Ovary (tissue), 10 donors: ENCODE measurements at regions of chr16 and their contacts with region 1.

Region 1: GRCh38 chr16:57576429-57576870 is 34.0 kb downstream of the ADGRG5 start:
- DNase-seq: peak; percentile 47 to 82 (median 71)
- H3K4me3 ChIP-seq: no peak overlapping the region
- H3K27ac ChIP-seq: no peak overlapping the region
- H3K4me1 ChIP-seq: peaks cover 2% of the 10 kb centered on the region
- H3K27me3 ChIP-seq: no peaks in the 10 kb centered on the region
- CTCF ChIP-seq: peak; percentile 40 to 71 (median 59)
- EP300 ChIP-seq: no peak
- POLR2A ChIP-seq: no peak

Region 2: GRCh38 chr16:57863434-57864160 is 287.1 kb after region 1 on chr16:
- intact Hi-C with region 1: loop called in 1 of 4 experiments (anchors 10 kb)
- DNase-seq: peak; percentile 53 to 71 (median 61)
- H3K4me3 ChIP-seq: no peak overlapping the region
- H3K27ac ChIP-seq: no peak overlapping the region
- H3K4me1 ChIP-seq: no peaks in the 10 kb centered on the region
- H3K27me3 ChIP-seq: no peaks in the 10 kb centered on the region
- CTCF ChIP-seq: peak in 2 of 3 donors; percentile 46 to 48
- EP300 ChIP-seq: no peak
- POLR2A ChIP-seq: no peak

Region 3: DNA sequence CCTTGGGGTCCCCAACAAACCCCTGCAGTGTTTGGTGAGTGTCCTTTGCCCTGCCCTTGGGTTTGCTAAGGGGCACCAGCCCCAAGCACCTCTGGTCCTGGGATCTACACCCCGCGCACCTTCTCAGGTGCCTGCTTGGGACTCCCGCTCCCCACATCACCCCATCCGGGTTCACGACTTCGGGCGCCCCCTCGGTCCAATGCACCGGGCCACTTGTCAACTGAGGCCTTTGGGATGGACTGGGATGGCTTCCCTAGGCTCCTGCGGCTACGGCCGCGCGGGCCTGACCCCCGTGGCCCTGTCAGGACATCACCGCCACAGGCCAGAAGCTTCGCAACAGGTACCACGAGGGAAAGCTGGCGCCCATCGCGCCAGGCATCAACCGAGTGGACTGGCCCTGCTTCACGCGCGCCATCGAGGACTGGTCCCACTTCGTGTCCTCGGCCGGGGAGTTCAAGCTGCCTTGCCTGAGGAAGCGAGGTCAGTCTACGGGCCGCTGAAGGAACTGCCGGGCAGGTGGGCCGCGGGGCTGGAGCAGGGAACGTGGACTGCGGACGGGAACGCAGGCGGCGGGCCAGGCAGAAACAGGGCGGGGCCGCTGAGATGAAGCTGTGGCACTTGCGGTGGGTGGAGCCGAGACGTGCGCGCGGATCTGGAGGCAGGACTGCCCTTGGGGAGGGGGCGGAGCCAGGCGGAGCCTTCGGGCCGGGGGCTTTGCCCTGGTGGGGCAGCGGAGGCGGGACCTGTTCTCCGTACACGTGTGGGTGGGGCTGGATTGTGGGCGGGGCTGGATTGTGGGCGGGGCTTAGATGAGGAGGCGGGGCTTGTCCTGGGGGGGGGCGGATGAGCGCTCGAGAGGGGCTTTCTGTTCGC is 408.1 kb after region 1 on chr16:
- intact Hi-C with region 1: loop called in 1 of 4 experiments (anchors 5 kb)
- DNase-seq: peak; percentile 90 to 94 (median 91)
- H3K4me3 ChIP-seq: peak overlapping the region; percentile 51
- H3K27ac ChIP-seq: peak overlapping the region in 1 of 2 donors; percentile 65
- H3K4me1 ChIP-seq: peaks cover 5% of the 10 kb centered on the region
- H3K27me3 ChIP-seq: no peaks in the 10 kb centered on the region
- CTCF ChIP-seq: no peak
- EP300 ChIP-seq: no peak
- POLR2A ChIP-seq: no peak

Region 4: GRCh38 chr16:57994778-57995177 is 418.3 kb after region 1 on chr16:
- intact Hi-C with region 1: loop called in 2 of 4 experiments (anchors 5 to 10 kb)
- DNase-seq: no peak
- H3K4me3 ChIP-seq: no peak overlapping the region
- H3K27ac ChIP-seq: no peak overlapping the region
- H3K4me1 ChIP-seq: peaks cover 3% of the 10 kb centered on the region
- H3K27me3 ChIP-seq: no peaks in the 10 kb centered on the region
- CTCF ChIP-seq: no peak
- EP300 ChIP-seq: no peak
- POLR2A ChIP-seq: no peak

Region 5: GRCh38 chr16:58000706-58001676 is 424.5 kb after region 1 on chr16 and contains the start of gene USB1:
- intact Hi-C with region 1: loop called in 2 of 4 experiments (anchors 10 kb)
- DNase-seq: peak; percentile 80 to 92 (median 88)
- H3K4me3 ChIP-seq: peak within 1 kb of the TSS; percentile 69
- H3K27ac ChIP-seq: peak within 1 kb of the TSS; percentile 64 to 77
- H3K4me1 ChIP-seq: peaks cover 4% of the 10 kb centered on the region
- H3K27me3 ChIP-seq: no peaks in the 10 kb centered on the region
- CTCF ChIP-seq: peak; percentile 54 to 73 (median 58)
- EP300 ChIP-seq: no peak
- POLR2A ChIP-seq: peak; percentile 38
- total RNA-seq, gene USB1: 8.5 to 30.7 (median 22.5) TPM